ENCODE measurements at regions of chr1 and their contacts with region 1.

Region 1: GRCh38 chr1:101288491-101288944 is 51.7 kb downstream of the S1PR1 start:
- DNase-seq: peak; percentile 83
- ATAC-seq: peak; percentile 85
- H3K4me3 ChIP-seq: no peak overlapping the region
- H3K4me3 Mint-ChIP-seq: no peak overlapping the region
- H3K27ac ChIP-seq: no peak overlapping the region
- H3K27ac Mint-ChIP-seq: peak overlapping the region; percentile 47
- H3K4me1 ChIP-seq: peaks cover 24 to 42% of the 10 kb centered on the region in 2 donors
- H3K4me1 Mint-ChIP-seq: peaks cover 34% of the 10 kb centered on the region
- H3K27me3 ChIP-seq: no peaks in the 10 kb centered on the region
- H3K27me3 Mint-ChIP-seq: no peaks in the 10 kb centered on the region
- CTCF ChIP-seq: peak; percentile 93

Region 2: DNA sequence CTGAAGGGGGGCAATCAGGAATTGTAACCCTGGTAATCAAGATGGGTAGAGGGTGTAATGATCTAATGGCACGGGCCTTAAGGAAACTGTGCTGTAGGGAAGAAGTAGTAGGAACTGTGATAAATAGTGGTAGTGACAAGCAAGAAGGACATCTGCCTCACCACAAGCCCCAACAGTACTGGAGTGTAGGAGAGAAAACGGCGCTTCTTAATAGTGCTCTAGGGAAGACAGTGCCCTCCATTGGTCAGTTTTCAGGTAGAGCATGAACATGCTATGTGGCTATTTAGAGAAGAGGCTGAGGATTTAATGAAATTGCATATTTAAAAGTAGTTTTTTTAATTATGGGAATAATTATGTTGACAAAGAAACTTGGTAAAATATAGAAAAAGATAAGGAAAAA is 360.4 kb before region 1 on chr1:
- CTCF ChIA-PET with region 1: interaction called, 190 read pairs
- POLR2A ChIA-PET with region 1: interaction called, 4 read pairs
- intact Hi-C with region 1: no loop called
- DNase-seq: no peak
- ATAC-seq: no peak
- H3K4me3 ChIP-seq: no peak overlapping the region
- H3K4me3 Mint-ChIP-seq: no peak overlapping the region
- H3K27ac ChIP-seq: peak overlapping the region in 1 of 2 donors; percentile 43
- H3K27ac Mint-ChIP-seq: no peak overlapping the region
- H3K4me1 ChIP-seq: peaks cover 15 to 19% of the 10 kb centered on the region in 2 donors
- H3K4me1 Mint-ChIP-seq: peaks cover 20% of the 10 kb centered on the region
- H3K27me3 ChIP-seq: no peaks in the 10 kb centered on the region
- H3K27me3 Mint-ChIP-seq: no peaks in the 10 kb centered on the region
- CTCF ChIP-seq: no peak

Region 3: GRCh38 chr1:100995198-100995988 is 293.1 kb before region 1 on chr1:
- CTCF ChIA-PET with region 1: interaction called, 12 read pairs
- POLR2A ChIA-PET with region 1: no interaction called
- intact Hi-C with region 1: no loop called
- DNase-seq: peak; percentile 20
- ATAC-seq: peak; percentile 17
- H3K4me3 ChIP-seq: peak overlapping the region in 1 of 5 experiments; percentile 20
- H3K4me3 Mint-ChIP-seq: peak overlapping the region; percentile 20
- H3K27ac ChIP-seq: peak overlapping the region; percentile 35 to 69
- H3K27ac Mint-ChIP-seq: peak overlapping the region; percentile 78
- H3K4me1 ChIP-seq: peaks cover 8 to 11% of the 10 kb centered on the region in 2 donors
- H3K4me1 Mint-ChIP-seq: peaks cover 20% of the 10 kb centered on the region
- H3K27me3 ChIP-seq: no peaks in the 10 kb centered on the region
- H3K27me3 Mint-ChIP-seq: no peaks in the 10 kb centered on the region
- CTCF ChIP-seq: no peak

Region 4: DNA sequence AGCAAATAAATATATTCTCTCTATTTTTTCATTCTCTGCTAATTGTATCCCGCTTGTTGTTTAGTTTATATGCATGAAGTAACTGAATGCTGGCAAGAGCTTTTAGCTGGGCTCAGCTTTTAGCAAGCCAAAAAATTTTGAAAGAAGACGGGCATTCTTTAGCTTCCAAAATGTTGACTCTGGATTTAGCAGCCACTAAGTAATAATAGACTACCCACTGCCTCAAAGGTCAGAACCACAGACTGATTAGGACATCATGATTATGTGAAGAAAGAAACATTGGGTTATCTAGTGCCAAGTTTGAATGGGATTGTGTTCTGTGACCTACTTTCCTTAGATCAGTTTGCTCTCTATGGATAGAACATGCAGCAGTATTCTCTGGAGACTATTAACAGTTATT is 182.6 kb before region 1 on chr1:
- CTCF ChIA-PET with region 1: interaction called, 64 read pairs
- POLR2A ChIA-PET with region 1: no interaction called
- intact Hi-C with region 1: no loop called
- DNase-seq: no peak
- ATAC-seq: no peak
- H3K4me3 ChIP-seq: no peak overlapping the region
- H3K4me3 Mint-ChIP-seq: no peak overlapping the region
- H3K27ac ChIP-seq: no peak overlapping the region
- H3K27ac Mint-ChIP-seq: no peak overlapping the region
- H3K4me1 ChIP-seq: peaks cover 12 to 13% of the 10 kb centered on the region in 2 donors
- H3K4me1 Mint-ChIP-seq: peaks cover 24% of the 10 kb centered on the region
- H3K27me3 ChIP-seq: no peaks in the 10 kb centered on the region
- H3K27me3 Mint-ChIP-seq: no peaks in the 10 kb centered on the region
- CTCF ChIP-seq: no peak

Region 5: DNA sequence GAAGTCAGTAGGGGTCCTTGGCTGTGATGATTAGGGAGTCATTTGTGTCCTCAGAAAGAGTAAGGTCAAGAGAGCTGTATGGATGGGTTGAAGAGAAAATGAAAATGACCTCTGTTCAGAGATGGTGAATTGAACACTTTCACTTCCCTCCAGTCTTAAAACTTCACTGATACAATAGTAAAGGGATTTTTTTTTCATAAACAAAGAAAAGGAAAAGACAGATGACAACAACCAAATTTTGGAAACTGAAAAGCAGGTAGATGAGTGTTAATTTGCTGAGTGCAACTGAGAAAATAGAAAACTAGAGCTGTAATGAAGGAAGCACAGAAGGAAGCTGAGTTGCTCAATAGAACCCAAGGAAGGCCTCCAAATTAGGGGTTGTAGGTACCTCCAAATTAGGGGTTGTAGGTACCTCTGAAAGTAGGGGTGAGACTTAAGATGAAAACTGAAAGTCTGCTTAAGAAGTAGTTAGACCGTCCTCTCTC is 66.5 kb before region 1 on chr1:
- CTCF ChIA-PET with region 1: interaction called, 10 read pairs
- POLR2A ChIA-PET with region 1: interaction called, 3 read pairs
- intact Hi-C with region 1: no loop called
- DNase-seq: peak; percentile 62
- ATAC-seq: peak; percentile 79
- H3K4me3 ChIP-seq: peak overlapping the region in 1 of 5 experiments; percentile 7
- H3K4me3 Mint-ChIP-seq: peak overlapping the region; percentile 63
- H3K27ac ChIP-seq: peak overlapping the region; percentile 43 to 70
- H3K27ac Mint-ChIP-seq: peak overlapping the region; percentile 83
- H3K4me1 ChIP-seq: peaks cover 18% of the 10 kb centered on the region in 2 donors
- H3K4me1 Mint-ChIP-seq: peaks cover 17% of the 10 kb centered on the region
- H3K27me3 ChIP-seq: no peaks in the 10 kb centered on the region
- H3K27me3 Mint-ChIP-seq: no peaks in the 10 kb centered on the region
- CTCF ChIP-seq: no peak

Region 6: DNA sequence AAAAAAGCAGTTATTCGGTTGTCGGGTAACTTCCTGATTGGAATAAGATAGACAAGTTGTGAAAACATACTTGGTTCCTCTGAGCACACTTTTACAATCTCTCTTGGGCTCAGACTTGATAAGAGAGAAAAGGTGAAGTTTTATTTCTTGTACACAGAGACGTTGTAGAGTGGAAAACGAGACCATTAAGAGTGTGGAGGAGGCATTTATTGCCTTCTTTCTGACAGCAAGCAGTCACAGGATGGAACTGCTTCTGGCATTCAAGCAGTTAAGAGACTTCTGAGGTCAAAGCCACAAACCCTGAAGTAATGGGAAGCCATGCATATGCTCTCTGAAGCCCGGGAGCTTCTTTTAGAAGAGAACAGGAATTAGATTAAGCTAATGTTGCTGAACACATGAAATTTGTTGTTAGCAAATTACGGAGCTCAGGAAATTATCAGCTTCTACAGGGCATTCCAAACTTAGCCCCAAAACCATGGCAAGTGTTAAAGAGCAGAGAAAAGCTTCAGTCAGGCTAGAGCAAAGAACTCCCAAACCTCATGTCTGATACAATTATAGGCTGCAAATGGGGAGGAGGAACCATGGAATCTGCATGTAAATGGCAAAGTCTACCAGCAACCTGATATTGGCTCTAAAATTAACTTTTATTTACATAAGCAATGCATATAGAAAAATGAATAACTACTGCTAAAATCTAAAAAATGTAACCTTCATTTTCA is 25.7 kb before region 1 on chr1:
- CTCF ChIA-PET with region 1: interaction called, 19 read pairs
- POLR2A ChIA-PET with region 1: interaction called, 3 read pairs
- intact Hi-C with region 1: no loop called
- DNase-seq: peak; percentile 49
- ATAC-seq: peak; percentile 37
- H3K4me3 ChIP-seq: peak overlapping the region in 1 of 5 experiments; percentile 19
- H3K4me3 Mint-ChIP-seq: peak overlapping the region; percentile 60
- H3K27ac ChIP-seq: peak overlapping the region in 1 of 2 donors; percentile 45
- H3K27ac Mint-ChIP-seq: peak overlapping the region; percentile 16
- H3K4me1 ChIP-seq: peaks cover 44 to 48% of the 10 kb centered on the region in 2 donors
- H3K4me1 Mint-ChIP-seq: peaks cover 57% of the 10 kb centered on the region
- H3K27me3 ChIP-seq: no peaks in the 10 kb centered on the region
- H3K27me3 Mint-ChIP-seq: no peaks in the 10 kb centered on the region
- CTCF ChIP-seq: no peak

Region 7: DNA sequence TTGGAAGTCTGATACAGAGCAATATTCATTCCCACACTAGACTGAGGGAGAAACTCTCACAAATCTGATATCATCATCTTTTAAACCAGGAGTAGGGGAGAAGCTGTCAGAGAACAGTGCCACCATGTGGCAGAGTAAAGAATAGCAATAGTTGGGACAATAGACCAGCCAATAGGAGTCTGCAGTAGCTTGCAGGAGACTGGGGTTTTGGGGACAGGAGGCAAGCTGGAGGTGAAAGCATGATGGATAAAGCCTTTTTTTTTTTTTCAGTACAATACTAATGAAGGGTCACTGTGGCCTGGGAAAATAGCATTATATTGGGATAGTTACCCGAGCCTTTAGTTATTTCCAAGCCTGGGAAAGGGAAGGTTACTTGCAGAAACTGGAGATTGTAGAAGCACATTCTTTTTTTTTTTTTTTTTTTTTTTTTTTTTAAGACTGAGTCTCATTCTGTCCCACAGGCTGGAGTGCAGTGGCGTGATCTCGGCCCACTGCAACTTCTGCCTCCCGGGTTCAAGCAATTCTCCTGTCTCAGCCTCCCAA is 69.0 kb after region 1 on chr1:
- CTCF ChIA-PET with region 1: interaction called, 72 read pairs
- POLR2A ChIA-PET with region 1: no interaction called
- intact Hi-C with region 1: loop called (anchors 1 kb)
- DNase-seq: peak; percentile 88
- ATAC-seq: peak; percentile 98
- H3K4me3 ChIP-seq: no peak overlapping the region
- H3K4me3 Mint-ChIP-seq: no peak overlapping the region
- H3K27ac ChIP-seq: no peak overlapping the region
- H3K27ac Mint-ChIP-seq: no peak overlapping the region
- H3K4me1 ChIP-seq: peaks cover 4 to 7% of the 10 kb centered on the region in 2 donors
- H3K4me1 Mint-ChIP-seq: peaks cover 7% of the 10 kb centered on the region
- H3K27me3 ChIP-seq: no peaks in the 10 kb centered on the region
- H3K27me3 Mint-ChIP-seq: no peaks in the 10 kb centered on the region
- CTCF ChIP-seq: peak; percentile 91

Region 8: DNA sequence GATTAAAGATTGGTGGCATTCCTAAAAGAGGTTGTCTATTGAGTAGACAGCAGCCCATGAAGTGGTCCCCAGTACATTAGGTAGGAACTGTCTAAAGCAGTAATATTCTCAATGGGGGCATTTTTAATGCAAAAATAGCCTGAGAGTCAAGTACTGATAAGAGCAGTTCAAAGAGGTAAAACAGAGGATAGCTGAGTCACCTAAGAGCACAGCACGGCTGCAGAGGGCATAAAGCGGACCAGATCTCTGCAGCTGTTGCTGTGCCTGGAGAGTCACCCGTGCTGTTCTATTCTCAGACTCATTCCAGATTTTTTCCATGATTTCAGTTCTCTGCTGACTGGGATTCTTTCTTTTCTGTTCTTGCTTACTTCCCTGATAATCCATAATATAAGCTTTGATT is 395.0 kb after region 1 on chr1:
- CTCF ChIA-PET with region 1: no interaction called
- POLR2A ChIA-PET with region 1: no interaction called
- intact Hi-C with region 1: no loop called
- DNase-seq: no peak
- ATAC-seq: no peak
- H3K4me3 ChIP-seq: no peak overlapping the region
- H3K4me3 Mint-ChIP-seq: no peak overlapping the region
- H3K27ac ChIP-seq: no peak overlapping the region
- H3K27ac Mint-ChIP-seq: no peak overlapping the region
- H3K4me1 ChIP-seq: no peaks in the 10 kb centered on the region
- H3K4me1 Mint-ChIP-seq: no peaks in the 10 kb centered on the region
- H3K27me3 ChIP-seq: no peaks in the 10 kb centered on the region
- H3K27me3 Mint-ChIP-seq: no peaks in the 10 kb centered on the region
- CTCF ChIP-seq: no peak